Activated CD8-positive, alpha-beta T cell treated with anti-CD3 and anti-CD28 coated beads for 36 hours (primary cell): ENCODE measurements at regions of chr11 and their contacts with region 1.

Region 1: GRCh38 chr11:77619576-77620198 is 17.9 kb downstream of the CLNS1A start:
- DNase-seq: no peak
- ATAC-seq: no peak
- H3K4me3 Mint-ChIP-seq: no peak overlapping the region
- H3K27ac Mint-ChIP-seq: no peak overlapping the region
- H3K4me1 Mint-ChIP-seq: no peaks in the 10 kb centered on the region
- H3K27me3 Mint-ChIP-seq: no peaks in the 10 kb centered on the region
- CTCF ChIP-seq: peak; percentile 75

Region 2: GRCh38 chr11:77589521-77590193 is 30.0 kb before region 1 on chr11 and contains the start of gene AQP11:
- CTCF ChIA-PET with region 1: interaction called, 13 read pairs
- POLR2A ChIA-PET with region 1: interaction called, 3 read pairs
- intact Hi-C with region 1: no loop called
- DNase-seq: peak; percentile 64
- ATAC-seq: peak; percentile 84
- H3K4me3 Mint-ChIP-seq: peak within 1 kb of the TSS; percentile 81
- H3K27ac Mint-ChIP-seq: peak within 1 kb of the TSS; percentile 59
- H3K4me1 Mint-ChIP-seq: peaks cover 15% of the 10 kb centered on the region
- H3K27me3 Mint-ChIP-seq: no peaks in the 10 kb centered on the region
- CTCF ChIP-seq: no peak
- total RNA-seq, gene AQP11: 0.47 to 0.59 TPM

Region 3: GRCh38 chr11:77602381-77603088 is 17.2 kb before region 1 on chr11:
- CTCF ChIA-PET with region 1: interaction called, 17 read pairs
- POLR2A ChIA-PET with region 1: no interaction called
- intact Hi-C with region 1: no loop called
- DNase-seq: no peak
- ATAC-seq: no peak
- H3K4me3 Mint-ChIP-seq: no peak overlapping the region
- H3K27ac Mint-ChIP-seq: no peak overlapping the region
- H3K4me1 Mint-ChIP-seq: no peaks in the 10 kb centered on the region
- H3K27me3 Mint-ChIP-seq: no peaks in the 10 kb centered on the region
- CTCF ChIP-seq: no peak

Region 4: DNA sequence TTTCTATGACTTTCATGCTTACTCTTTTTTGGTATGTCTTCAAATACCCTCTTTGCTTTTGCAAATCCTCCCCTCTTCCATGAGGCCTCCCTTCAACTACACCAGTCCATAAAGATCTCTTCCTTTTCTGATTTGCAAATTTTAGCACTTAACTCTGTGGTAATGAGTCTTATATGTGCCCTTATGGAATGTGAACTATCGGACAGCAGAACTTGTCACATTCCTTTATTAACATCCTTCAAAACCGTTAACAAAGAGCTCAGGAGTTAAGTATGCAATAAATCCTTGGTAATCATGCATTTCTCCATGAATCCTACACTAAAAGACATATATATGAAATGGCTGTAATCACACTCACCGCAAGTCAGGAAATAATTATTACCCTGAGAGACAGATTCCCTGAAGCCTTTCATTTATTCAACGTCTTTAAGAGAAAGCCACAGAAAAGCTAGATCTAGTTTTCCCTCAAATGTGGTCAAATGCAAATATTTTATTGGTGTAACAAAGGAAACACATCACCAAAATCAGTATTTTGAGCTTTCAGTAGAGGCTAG is 10.5 kb after region 1 on chr11:
- CTCF ChIA-PET with region 1: interaction called, 14 read pairs
- POLR2A ChIA-PET with region 1: interaction called, 4 read pairs
- intact Hi-C with region 1: no loop called
- DNase-seq: no peak
- ATAC-seq: no peak
- H3K4me3 Mint-ChIP-seq: no peak overlapping the region
- H3K27ac Mint-ChIP-seq: peak overlapping the region; percentile 37
- H3K4me1 Mint-ChIP-seq: peaks cover 41% of the 10 kb centered on the region
- H3K27me3 Mint-ChIP-seq: no peaks in the 10 kb centered on the region
- CTCF ChIP-seq: no peak

Region 5: GRCh38 chr11:77650123-77650522 is 30.4 kb after region 1 on chr11:
- CTCF ChIA-PET with region 1: no interaction called
- POLR2A ChIA-PET with region 1: no interaction called
- intact Hi-C with region 1: no loop called
- DNase-seq: no peak
- ATAC-seq: no peak
- H3K4me3 Mint-ChIP-seq: no peak overlapping the region
- H3K27ac Mint-ChIP-seq: no peak overlapping the region
- H3K4me1 Mint-ChIP-seq: no peaks in the 10 kb centered on the region
- H3K27me3 Mint-ChIP-seq: peaks cover 7% of the 10 kb centered on the region
- CTCF ChIP-seq: no peak

Region 6: DNA sequence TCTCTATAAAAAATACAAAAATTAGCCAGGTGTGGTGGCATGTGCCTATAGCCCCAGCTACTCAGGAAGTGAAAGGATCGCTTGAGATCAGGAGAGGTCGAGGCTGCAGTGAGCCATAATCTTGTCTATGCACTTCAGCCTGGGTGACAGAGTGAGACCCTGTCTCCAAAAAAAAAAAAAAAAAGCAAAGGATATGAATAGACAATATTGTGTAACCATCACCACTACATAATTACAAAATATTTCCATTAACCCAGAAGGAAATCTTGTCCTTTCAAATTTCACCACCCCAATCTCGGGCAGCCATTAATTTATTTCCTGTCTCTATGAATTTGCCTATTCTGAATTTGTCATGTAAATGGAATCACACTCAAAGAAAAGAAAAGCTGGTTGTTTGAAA is 179.7 kb after region 1 on chr11:
- CTCF ChIA-PET with region 1: no interaction called
- POLR2A ChIA-PET with region 1: no interaction called
- intact Hi-C with region 1: no loop called
- DNase-seq: no peak
- ATAC-seq: peak; percentile 34
- H3K4me3 Mint-ChIP-seq: no peak overlapping the region
- H3K27ac Mint-ChIP-seq: peak overlapping the region; percentile 64
- H3K4me1 Mint-ChIP-seq: peaks cover 77% of the 10 kb centered on the region
- H3K27me3 Mint-ChIP-seq: no peaks in the 10 kb centered on the region
- CTCF ChIP-seq: no peak